GM23248 (cell line): ENCODE measurements at regions of chr11 and their contacts with region 1.

Region 1: DNA sequence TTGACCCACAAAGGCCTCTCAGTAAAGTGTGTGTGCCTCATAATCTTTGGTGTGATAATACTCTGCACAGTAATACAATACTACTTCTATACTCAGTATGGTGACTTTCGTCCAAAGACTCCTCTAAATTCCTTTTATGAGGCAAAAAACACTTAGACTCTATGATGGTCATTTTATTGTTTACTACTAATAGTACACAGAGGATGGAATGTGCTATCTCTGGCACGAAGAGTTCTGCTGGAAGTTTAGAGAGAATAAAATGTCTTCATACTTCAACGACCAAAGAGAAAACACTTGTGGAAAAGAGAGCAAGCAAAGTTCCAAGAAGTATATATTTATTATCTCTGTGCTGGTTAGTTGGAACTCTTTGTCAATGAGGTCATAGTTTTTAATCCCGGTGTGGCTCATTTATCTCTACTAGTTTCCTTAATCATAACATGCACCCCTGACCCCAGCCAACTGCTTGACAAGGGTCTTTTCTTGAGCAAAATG is 7.5 kb upstream of the CSTF3 start:
- DNase-seq: peak; percentile 28
- H3K4me3 ChIP-seq: no peak overlapping the region
- H3K27ac ChIP-seq: no peak overlapping the region
- H3K4me1 ChIP-seq: peaks cover 35% of the 10 kb centered on the region
- H3K27me3 ChIP-seq: no peaks in the 10 kb centered on the region

Region 2: DNA sequence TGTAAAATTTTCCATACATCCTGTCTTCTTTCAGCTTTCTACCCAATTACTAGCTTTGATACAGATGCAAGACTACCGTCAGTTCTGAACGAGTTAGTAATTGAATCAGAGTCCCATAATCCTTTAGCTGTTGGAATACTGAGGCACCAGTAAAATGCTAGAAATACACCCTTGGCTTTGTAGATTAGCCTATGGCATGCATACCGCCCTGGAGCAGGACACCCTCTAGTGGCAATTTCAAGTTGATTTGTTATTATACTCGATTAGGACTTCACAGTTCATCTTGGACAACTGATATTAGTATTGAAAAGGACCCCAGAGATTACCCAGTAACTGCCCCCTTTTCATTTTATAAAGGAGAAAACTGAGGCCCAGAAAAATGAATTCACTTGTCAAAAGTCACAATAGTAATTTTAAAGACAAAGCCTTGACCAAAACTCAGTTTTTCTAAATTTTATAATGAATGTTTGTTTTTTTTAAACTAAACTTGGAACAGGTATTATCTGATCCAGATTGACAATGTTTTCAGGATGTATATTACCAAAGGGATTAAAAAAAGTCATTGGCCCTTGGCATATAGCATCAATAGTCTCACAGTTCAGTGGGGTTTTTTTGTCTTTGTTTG is 161.1 kb after region 1 on chr11:
- in situ Hi-C with region 1: loop called (anchors 5 kb)
- DNase-seq: peak; percentile 75
- H3K4me3 ChIP-seq: no peak overlapping the region
- H3K27ac ChIP-seq: no peak overlapping the region
- H3K4me1 ChIP-seq: peaks cover 60% of the 10 kb centered on the region
- H3K27me3 ChIP-seq: no peaks in the 10 kb centered on the region